ENCODE measurements at regions of chr18 and their contacts with region 1.

Region 1: GRCh38 chr18:21740724-21741510 is at the start of gene MIB1:
- DNase-seq: peak; percentile 42
- H3K4me3 ChIP-seq: peak within 1 kb of the TSS; percentile 89 to 98
- H3K27ac ChIP-seq: peak within 1 kb of the TSS; percentile 98 to 99
- H3K4me1 ChIP-seq: no peaks in the 10 kb centered on the region
- H3K27me3 ChIP-seq: no peaks in the 10 kb centered on the region
- CTCF ChIP-seq: peak in 1 of 4 experiments; percentile 13
- POLR2A ChIP-seq: peak; percentile 80
- total RNA-seq, gene MIB1: 30.0 to 34.7 TPM

Region 2: DNA sequence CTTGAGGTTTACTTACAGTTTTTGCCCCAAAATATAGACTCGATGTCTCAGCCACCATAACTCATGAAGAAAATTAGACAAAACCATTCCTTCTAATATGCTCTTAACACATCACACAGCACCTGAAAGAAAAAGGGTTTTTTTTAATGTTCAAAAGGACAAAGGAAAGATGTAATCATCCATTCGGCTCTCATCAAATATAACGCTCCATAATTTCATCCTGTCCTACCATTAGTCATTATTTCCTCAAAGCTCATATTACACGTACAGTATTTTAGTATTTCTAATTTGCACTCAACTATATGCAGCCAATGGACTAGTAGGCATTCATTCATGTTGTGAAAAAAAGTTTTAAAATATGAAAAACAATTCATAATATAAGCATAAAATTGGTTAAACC is 165.3 kb before region 1 on chr18:
- intact Hi-C with region 1: no loop called
- DNase-seq: no peak
- H3K4me3 ChIP-seq: no peak overlapping the region
- H3K27ac ChIP-seq: no peak overlapping the region
- H3K4me1 ChIP-seq: no peaks in the 10 kb centered on the region
- H3K27me3 ChIP-seq: no peaks in the 10 kb centered on the region
- CTCF ChIP-seq: no peak
- POLR2A ChIP-seq: no peak

Region 3: GRCh38 chr18:21600526-21601410 is 140.1 kb before region 1 on chr18 and contains the start of gene ESCO1:
- intact Hi-C with region 1: loop called (anchors 2 kb)
- DNase-seq: peak; percentile 95
- H3K4me3 ChIP-seq: peak within 1 kb of the TSS; percentile 88 to 93
- H3K27ac ChIP-seq: peak within 1 kb of the TSS; percentile 98
- H3K4me1 ChIP-seq: no peaks in the 10 kb centered on the region
- H3K27me3 ChIP-seq: no peaks in the 10 kb centered on the region
- CTCF ChIP-seq: peak; percentile 92 to 99 (median 98)
- POLR2A ChIP-seq: peak; percentile 88
- total RNA-seq, gene ESCO1: 19.6 to 21.8 TPM

Region 4: DNA sequence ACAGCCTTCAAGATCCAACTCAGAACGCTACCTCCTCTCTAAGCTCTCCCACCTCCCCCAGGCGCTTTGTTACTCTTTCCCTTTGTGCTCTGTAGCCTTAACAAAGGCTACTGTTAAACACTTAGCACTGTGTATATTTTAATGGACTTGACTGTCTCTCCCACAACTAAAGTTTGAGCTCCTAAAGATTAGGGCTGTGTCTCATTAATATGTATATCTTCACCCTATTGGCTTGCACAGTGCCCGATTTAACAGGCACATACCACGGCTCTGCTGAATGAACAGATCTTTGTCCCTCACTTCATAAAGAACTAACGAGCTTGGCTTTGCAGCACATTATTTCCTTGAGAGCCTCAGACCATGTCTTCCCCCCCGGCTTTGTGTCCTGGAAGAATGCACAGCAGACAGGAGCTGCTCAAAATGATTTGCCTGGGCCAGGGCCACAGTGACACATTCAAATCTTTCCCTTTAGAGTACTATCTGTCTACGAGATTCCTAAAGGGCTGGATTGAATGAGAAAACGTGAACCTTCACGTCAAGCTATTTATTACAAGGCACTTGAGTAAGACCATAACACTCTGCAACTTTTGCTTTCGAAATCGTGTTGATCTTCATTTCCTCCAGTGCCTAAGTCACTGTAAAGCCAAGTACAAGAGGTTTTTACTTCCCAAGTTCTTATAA is 58.4 kb before region 1 on chr18:
- intact Hi-C with region 1: loop called (anchors 5 kb)
- DNase-seq: peak; percentile 25
- H3K4me3 ChIP-seq: peak overlapping the region; percentile 6 to 28
- H3K27ac ChIP-seq: peak overlapping the region; percentile 63 to 69
- H3K4me1 ChIP-seq: no peaks in the 10 kb centered on the region
- H3K27me3 ChIP-seq: no peaks in the 10 kb centered on the region
- CTCF ChIP-seq: no peak
- POLR2A ChIP-seq: no peak

Region 5: DNA sequence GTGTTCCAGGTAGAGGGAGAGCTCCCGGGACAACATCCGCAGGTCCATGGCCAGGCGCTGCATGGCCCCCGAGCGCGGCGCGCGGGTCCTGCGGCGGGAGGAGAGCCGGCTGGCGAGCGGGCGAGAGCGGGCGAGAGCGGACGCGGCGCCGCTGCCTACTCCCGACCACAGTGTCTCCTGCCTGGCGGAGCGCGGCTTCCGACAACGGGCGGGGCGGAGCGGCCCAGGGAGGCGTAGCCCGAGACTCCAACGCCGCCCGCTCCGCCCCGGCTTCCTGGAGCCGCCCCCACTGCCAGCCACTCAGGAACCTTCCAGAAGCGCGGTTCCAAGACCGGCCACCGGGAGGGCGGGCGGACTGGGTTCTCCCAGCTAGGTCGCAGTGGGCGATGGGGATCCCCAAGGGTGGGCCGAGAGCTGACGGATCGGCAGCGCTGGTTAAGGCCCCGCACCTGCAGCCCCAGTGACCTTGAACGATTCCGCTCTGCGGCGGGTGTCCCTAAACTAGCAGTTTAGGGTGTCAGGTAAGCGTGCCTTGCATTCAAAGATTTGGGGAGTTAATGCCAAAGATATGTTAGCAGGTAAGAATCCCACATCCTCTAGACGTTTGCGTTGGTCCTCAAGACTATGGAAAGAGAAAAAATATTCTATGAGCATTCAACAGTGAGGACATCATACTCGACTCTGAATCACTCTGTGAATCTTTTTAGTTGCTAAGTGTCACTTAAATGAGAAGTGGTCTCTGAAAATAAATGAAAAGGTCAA is 36.1 kb before region 1 on chr18 and contains the start of gene ABHD3:
- intact Hi-C with region 1: loop called (anchors 5 kb)
- DNase-seq: peak; percentile 94
- H3K4me3 ChIP-seq: peak within 1 kb of the TSS; percentile 79 to 81
- H3K27ac ChIP-seq: peak within 1 kb of the TSS; percentile 93 to 96
- H3K4me1 ChIP-seq: no peaks in the 10 kb centered on the region
- H3K27me3 ChIP-seq: no peaks in the 10 kb centered on the region
- CTCF ChIP-seq: peak in 3 of 4 experiments; percentile 49 to 82 (median 80)
- POLR2A ChIP-seq: peak; percentile 99
- total RNA-seq, gene ABHD3: 9.6 to 18.5 TPM

Region 6: DNA sequence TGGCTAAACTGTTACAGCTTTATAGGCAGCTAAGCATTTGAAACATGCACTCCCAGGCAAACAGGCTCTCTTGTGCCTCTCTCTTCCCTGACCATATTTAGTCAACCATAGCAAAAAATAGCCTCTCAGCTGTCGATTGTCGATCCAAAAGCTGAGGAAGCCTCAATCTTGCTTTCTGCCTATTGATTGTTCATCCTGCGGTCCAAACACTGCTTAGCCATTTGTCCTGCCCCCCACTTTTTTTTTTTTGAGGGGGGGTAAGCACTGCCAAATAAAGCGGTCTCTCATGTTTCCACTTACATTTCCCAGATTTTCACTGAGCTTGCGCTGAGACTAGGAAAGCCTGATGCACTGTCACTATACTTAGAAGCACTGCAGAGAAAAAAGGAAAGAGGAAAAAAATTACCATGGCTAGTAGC is 90.5 kb after region 1 on chr18:
- intact Hi-C with region 1: loop called (anchors 5 kb)
- DNase-seq: no peak
- H3K4me3 ChIP-seq: no peak overlapping the region
- H3K27ac ChIP-seq: no peak overlapping the region
- H3K4me1 ChIP-seq: no peaks in the 10 kb centered on the region
- H3K27me3 ChIP-seq: no peaks in the 10 kb centered on the region
- CTCF ChIP-seq: no peak
- POLR2A ChIP-seq: no peak